ENCODE measurements at regions of chr2 and their contacts with region 1.

Region 1: DNA sequence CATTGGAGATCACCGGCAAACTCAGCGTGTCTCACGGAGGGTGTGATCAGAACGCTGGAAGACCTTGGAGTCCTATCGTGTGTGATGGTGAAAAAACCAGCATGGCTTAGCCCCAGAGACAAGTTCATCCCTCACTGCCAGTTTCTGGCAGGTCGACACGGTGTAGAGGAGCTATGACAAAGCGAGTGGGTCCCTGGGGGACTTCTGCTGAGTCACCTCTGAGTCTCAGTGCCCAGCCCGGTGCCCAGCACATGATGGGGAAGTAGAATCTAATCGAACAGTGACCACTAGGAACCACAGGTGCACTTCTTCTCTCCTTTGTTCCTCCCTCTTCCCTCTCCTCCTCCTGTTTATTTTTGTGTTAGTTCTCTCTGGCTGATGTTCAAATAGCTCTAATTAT is 45.9 kb upstream of the KCNF1 start:
- DNase-seq: no peak
- ATAC-seq: no peak
- H3K4me3 Mint-ChIP-seq: peak overlapping the region in 1 of 10 donors; percentile 23
- H3K27ac Mint-ChIP-seq: no peak overlapping the region
- H3K4me1 Mint-ChIP-seq: peaks cover 9 to 59% (median 21%) of the 10 kb centered on the region in 4 donors
- H3K27me3 Mint-ChIP-seq: peaks cover 7 to 54% (median 16%) of the 10 kb centered on the region in 5 donors

Region 2: GRCh38 chr2:10880586-10881321 is 14.9 kb after region 1 on chr2:
- POLR2A ChIA-PET with region 1: interaction called, 10 read pairs
- DNase-seq: no peak
- ATAC-seq: peak in 1 of 2 donors; percentile 78
- H3K4me3 Mint-ChIP-seq: peak overlapping the region in 3 of 10 donors; percentile 78 to 94 (median 82)
- H3K27ac Mint-ChIP-seq: peak overlapping the region in 3 of 10 donors; percentile 94 to 98 (median 96)
- H3K4me1 Mint-ChIP-seq: peaks cover 0 to 71% (median 2%) of the 10 kb centered on the region in 4 donors
- H3K27me3 Mint-ChIP-seq: peaks cover 0 to 16% (median 11%) of the 10 kb centered on the region in 5 donors